Activated CD8-positive, alpha-beta T cell treated with anti-CD3 and anti-CD28 coated beads, Interleukin-2, amount 10 ng/mL, durations not matched to agents 7 days and 5 days (primary cell): ENCODE measurements at regions of chr10 and their contacts with region 1.

Region 1: GRCh38 chr10:73644015-73644743 is 2.9 kb upstream of the MYOZ1 start:
- DNase-seq: peak; percentile 64
- ATAC-seq: peak; percentile 66
- H3K4me3 Mint-ChIP-seq: no peak overlapping the region
- H3K27ac Mint-ChIP-seq: peak overlapping the region; percentile 59
- H3K4me1 Mint-ChIP-seq: peaks cover 22% of the 10 kb centered on the region
- H3K27me3 Mint-ChIP-seq: peaks cover 16% of the 10 kb centered on the region

Region 2: DNA sequence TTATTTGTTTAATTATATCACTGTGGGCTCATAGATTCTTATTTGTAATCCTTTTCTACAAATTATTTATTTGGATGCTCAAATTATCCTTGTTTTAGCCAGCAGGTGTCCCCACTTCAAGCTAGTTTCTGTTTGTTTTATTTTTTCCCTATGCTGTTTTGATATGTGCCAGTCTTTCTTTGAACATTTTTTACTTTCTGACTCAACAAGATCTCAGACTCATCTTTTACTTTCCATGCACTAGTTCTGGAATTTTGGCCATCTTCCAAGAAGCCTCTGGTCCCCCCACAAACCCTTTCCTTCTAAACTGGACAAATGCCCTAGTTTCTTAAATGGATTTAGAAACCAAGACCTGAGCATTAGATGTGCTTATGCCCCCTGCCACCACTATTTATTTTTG is 380.2 kb before region 1 on chr10:
- CTCF ChIA-PET with region 1: interaction called, 22 read pairs
- POLR2A ChIA-PET with region 1: no interaction called
- DNase-seq: no peak
- ATAC-seq: no peak
- H3K4me3 Mint-ChIP-seq: no peak overlapping the region
- H3K27ac Mint-ChIP-seq: no peak overlapping the region
- H3K4me1 Mint-ChIP-seq: peaks cover 6% of the 10 kb centered on the region
- H3K27me3 Mint-ChIP-seq: peaks cover 4% of the 10 kb centered on the region

Region 3: GRCh38 chr10:73517271-73517877 is 126.8 kb before region 1 on chr10:
- CTCF ChIA-PET with region 1: interaction called, 25 read pairs
- POLR2A ChIA-PET with region 1: interaction called, 3 read pairs
- DNase-seq: no peak
- ATAC-seq: no peak
- H3K4me3 Mint-ChIP-seq: no peak overlapping the region
- H3K27ac Mint-ChIP-seq: no peak overlapping the region
- H3K4me1 Mint-ChIP-seq: no peaks in the 10 kb centered on the region
- H3K27me3 Mint-ChIP-seq: no peaks in the 10 kb centered on the region

Region 4: DNA sequence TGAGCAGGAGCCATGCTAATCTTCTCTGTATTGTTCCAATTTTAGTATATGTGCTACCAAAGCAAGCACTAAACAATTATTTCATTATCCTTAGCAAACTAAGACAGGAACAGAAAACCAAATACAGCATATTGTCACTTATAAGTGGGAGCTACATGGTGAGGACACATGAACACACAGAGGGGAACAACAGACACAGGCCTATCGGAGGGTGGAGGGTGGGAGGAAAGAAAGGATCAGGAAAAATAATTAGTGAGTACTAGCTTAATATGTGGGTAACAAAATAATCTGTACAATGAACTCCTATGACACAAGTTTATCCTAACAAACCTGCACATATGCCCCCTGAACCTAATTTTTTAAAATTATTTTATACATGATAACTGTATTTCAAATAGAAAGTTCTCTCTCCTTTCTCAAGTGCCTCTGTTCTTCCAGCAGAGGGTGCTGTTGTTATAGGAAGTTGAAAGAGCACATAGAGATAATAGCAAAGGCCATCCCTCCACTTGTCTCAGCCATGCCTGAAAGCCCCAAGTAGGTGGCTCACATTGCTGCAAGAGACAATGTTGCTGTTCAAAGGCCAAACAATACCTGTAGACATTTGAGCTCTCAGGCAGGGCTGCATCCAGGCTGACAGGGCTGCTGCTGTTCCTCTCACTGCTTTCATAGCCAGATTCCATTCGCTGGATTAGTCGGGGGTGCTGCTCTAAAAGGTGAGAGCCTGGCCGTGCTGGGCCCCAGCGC is 114.9 kb before region 1 on chr10:
- CTCF ChIA-PET with region 1: interaction called, 152 read pairs
- POLR2A ChIA-PET with region 1: interaction called, 6 read pairs
- DNase-seq: peak; percentile 73
- ATAC-seq: peak; percentile 96
- H3K4me3 Mint-ChIP-seq: no peak overlapping the region
- H3K27ac Mint-ChIP-seq: no peak overlapping the region
- H3K4me1 Mint-ChIP-seq: no peaks in the 10 kb centered on the region
- H3K27me3 Mint-ChIP-seq: no peaks in the 10 kb centered on the region

Region 5: GRCh38 chr10:73537288-73537687 is 106.9 kb before region 1 on chr10:
- CTCF ChIA-PET with region 1: interaction called, 152 read pairs
- POLR2A ChIA-PET with region 1: no interaction called
- DNase-seq: no peak
- ATAC-seq: peak; percentile 84
- H3K4me3 Mint-ChIP-seq: no peak overlapping the region
- H3K27ac Mint-ChIP-seq: no peak overlapping the region
- H3K4me1 Mint-ChIP-seq: peaks cover 15% of the 10 kb centered on the region
- H3K27me3 Mint-ChIP-seq: no peaks in the 10 kb centered on the region

Region 6: DNA sequence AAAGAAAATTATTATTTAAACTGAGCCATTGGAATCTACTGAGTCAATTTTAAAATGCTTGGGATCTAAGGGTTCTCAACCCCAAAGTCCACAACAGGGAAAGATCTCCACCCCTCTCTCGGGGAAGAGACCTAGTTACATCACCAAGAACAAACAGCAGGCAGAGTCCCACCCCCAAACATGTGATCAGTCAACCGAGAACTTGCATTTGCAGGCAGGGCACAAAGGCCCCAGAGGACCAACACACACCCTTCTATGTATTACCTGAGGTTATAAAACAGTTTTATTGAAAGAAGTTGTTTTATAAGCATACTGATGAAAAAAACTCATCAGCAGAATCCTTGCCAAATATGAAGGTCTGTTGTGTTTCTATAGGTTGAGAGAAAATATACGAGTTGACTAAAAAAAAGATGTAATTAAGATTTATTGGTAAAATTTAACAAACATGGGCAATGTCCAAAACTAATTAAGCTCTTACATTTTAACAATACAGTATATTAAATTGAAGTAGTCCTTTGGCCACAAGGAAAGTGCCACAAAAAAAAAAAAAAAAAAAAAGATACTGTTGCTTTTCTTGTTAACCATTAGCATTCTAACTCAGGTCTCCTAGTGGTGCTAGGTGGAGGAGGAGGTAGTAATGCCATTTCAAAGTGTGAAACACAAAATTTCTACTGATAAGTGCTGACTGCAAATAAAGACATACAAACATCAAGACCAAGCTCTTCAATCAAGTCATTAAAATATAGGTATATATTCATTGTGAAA is 52.1 kb before region 1 on chr10:
- CTCF ChIA-PET with region 1: interaction called, 19 read pairs
- POLR2A ChIA-PET with region 1: no interaction called
- DNase-seq: peak; percentile 36
- ATAC-seq: peak; percentile 51
- H3K4me3 Mint-ChIP-seq: peak overlapping the region; percentile 39
- H3K27ac Mint-ChIP-seq: no peak overlapping the region
- H3K4me1 Mint-ChIP-seq: peaks cover 18% of the 10 kb centered on the region
- H3K27me3 Mint-ChIP-seq: no peaks in the 10 kb centered on the region

Region 7: DNA sequence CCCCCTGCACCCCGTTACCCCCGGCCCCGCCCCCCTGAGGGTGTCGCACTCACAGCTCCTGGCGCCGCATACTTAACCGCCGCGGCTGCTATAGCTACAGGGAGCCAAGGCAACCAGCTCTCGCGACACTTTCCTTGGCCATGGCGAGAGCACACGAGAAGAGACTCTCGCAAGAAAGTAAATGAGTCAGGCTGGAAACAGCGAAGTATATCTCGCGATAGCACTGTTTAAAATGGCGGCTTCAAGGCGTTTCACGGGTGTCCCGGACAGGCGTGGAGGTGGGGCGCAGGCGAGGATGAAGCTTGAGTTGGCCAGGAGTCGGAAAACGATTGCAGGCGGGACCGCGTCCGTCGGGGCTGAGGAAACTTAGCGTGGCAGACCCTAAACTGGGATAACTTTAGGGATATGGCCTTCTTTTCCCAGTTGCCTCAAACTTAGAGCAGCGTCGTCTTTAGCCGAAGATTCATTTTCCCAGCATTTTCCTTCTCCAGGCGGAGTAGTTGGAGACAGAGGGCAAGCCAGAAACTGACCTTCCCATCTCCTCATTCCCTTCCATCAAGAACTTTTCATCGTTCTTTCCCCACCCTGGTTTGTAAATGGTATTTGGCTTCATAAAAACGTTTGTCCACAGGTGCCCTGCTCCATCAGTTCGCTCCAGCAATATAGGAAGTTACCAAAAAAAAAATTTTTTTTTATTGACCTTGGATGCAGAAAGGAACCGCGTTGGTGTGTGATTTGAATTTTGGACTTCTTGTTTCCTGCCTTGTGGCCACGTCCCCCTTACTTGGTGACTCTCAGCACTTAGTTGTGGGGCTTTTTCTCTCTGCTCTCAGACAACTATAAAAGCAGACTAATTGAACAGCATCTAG is 18.1 kb before region 1 on chr10:
- CTCF ChIA-PET with region 1: interaction called, 24 read pairs
- POLR2A ChIA-PET with region 1: no interaction called
- DNase-seq: peak; percentile 96
- ATAC-seq: peak; percentile 92
- H3K4me3 Mint-ChIP-seq: peak overlapping the region; percentile 88
- H3K27ac Mint-ChIP-seq: peak overlapping the region; percentile 91
- H3K4me1 Mint-ChIP-seq: peaks cover 26% of the 10 kb centered on the region
- H3K27me3 Mint-ChIP-seq: no peaks in the 10 kb centered on the region